HepG2 (cell line): ENCODE measurements at regions of chr2 and their contacts with region 1.

Region 1: GRCh38 chr2:11583840-11584524 is 50.1 kb downstream of the GREB1 start:
- DNase-seq: peak; percentile 85
- ATAC-seq: peak; percentile 56
- H3K4me3 ChIP-seq: no peak overlapping the region
- H3K27ac ChIP-seq: peak overlapping the region; percentile 36
- H3K4me1 ChIP-seq: peaks cover 22% of the 10 kb centered on the region
- H3K27me3 ChIP-seq: no peaks in the 10 kb centered on the region
- CTCF ChIP-seq: peak; percentile 92
- EP300 ChIP-seq: no peak; a peak in 1 of 4 replicates
- POLR2A ChIP-seq: no peak
- RAD21 ChIP-seq: peak; percentile 97

Region 2: GRCh38 chr2:11446733-11447248 is 137.2 kb before region 1 on chr2:
- CTCF ChIA-PET with region 1: interaction called, 11 read pairs
- POLR2A ChIA-PET with region 1: no interaction called
- in situ Hi-C with region 1: no loop called
- intact Hi-C with region 1: no loop called
- DNase-seq: peak; percentile 75
- ATAC-seq: peak; percentile 86
- H3K4me3 ChIP-seq: no peak overlapping the region
- H3K27ac ChIP-seq: no peak overlapping the region
- H3K4me1 ChIP-seq: no peaks in the 10 kb centered on the region
- H3K27me3 ChIP-seq: no peaks in the 10 kb centered on the region
- CTCF ChIP-seq: peak; percentile 94
- EP300 ChIP-seq: no peak
- POLR2A ChIP-seq: no peak
- RAD21 ChIP-seq: peak; percentile 90

Region 3: GRCh38 chr2:11477994-11478393 is 106.0 kb before region 1 on chr2:
- CTCF ChIA-PET with region 1: interaction called, 193 read pairs
- POLR2A ChIA-PET with region 1: interaction called, 11 read pairs
- in situ Hi-C with region 1: loop called (anchors 5 kb)
- intact Hi-C with region 1: loop called (anchors 1 kb)
- DNase-seq: peak; percentile 90
- ATAC-seq: peak; percentile 66
- H3K4me3 ChIP-seq: no peak overlapping the region
- H3K27ac ChIP-seq: no peak overlapping the region
- H3K4me1 ChIP-seq: peaks cover 52% of the 10 kb centered on the region
- H3K27me3 ChIP-seq: no peaks in the 10 kb centered on the region
- CTCF ChIP-seq: peak; percentile 95
- EP300 ChIP-seq: peak in 1 of 2 experiments; percentile 17; a peak in 1 of 4 replicates
- POLR2A ChIP-seq: no peak
- RAD21 ChIP-seq: peak; percentile 97

Region 4: GRCh38 chr2:11539317-11540152 is 44.4 kb before region 1 on chr2:
- CTCF ChIA-PET with region 1: no interaction called
- POLR2A ChIA-PET with region 1: interaction called, 14 read pairs
- in situ Hi-C with region 1: no loop called
- intact Hi-C with region 1: loop called (anchors 2 kb)
- DNase-seq: peak; percentile 96
- ATAC-seq: peak; percentile 81
- H3K4me3 ChIP-seq: peak overlapping the region; percentile 54 to 72 (median 72)
- H3K27ac ChIP-seq: peak overlapping the region; percentile 88
- H3K4me1 ChIP-seq: peaks cover 96% of the 10 kb centered on the region
- H3K27me3 ChIP-seq: no peaks in the 10 kb centered on the region
- CTCF ChIP-seq: no peak
- EP300 ChIP-seq: peak in 1 of 2 experiments; percentile 85; a peak in 2 of 4 replicates
- POLR2A ChIP-seq: peak; percentile 67 to 76
- RAD21 ChIP-seq: 0 out of 2 replicates have a peak, but pooled peaks have one; percentile 7

Region 5: GRCh38 chr2:11598228-11598731 is 14.3 kb after region 1 on chr2:
- CTCF ChIA-PET with region 1: no interaction called
- POLR2A ChIA-PET with region 1: no interaction called
- in situ Hi-C with region 1: no loop called
- intact Hi-C with region 1: no loop called
- DNase-seq: no peak
- ATAC-seq: no peak; the same call in 2 of the 3 replicates
- H3K4me3 ChIP-seq: no peak overlapping the region
- H3K27ac ChIP-seq: no peak overlapping the region
- H3K4me1 ChIP-seq: peaks cover 4% of the 10 kb centered on the region; the same call in 1 of the 2 replicates
- H3K27me3 ChIP-seq: no peaks in the 10 kb centered on the region
- CTCF ChIP-seq: no peak
- EP300 ChIP-seq: no peak
- POLR2A ChIP-seq: no peak
- RAD21 ChIP-seq: no peak